ENCODE measurements at regions of chr5 and their contacts with region 1.

Region 1: DNA sequence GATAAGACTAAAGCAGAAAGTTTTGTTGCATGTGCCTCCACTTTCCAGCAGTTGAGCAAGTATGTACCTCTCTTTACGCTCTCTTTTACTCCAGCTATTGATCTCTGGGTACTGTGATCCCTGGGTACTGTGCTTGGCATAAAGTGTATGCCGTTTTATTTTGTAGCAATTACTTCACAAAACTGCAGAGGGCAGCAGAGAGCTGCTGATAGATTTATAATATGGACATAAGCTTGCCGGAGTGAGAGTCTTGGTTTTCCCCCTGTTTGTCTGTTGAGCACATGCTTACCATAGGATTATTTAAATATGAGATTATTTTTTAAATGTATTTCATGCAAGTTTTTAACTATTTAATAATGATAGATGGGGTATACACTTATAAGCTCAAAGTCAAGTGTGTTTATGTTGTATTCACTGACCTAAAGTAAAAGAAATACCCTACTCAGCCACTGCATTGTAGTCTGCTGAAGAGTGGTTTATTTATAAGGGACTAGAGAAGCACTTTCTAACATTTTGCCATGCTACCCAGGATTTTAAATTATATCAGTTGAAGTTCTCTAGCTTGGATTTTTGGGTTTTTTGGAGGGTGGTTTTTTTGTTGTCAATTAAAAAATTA is 13.0 kb downstream of the TTC1 start:
- DNase-seq: no peak
- ATAC-seq: peak; percentile 86 to 95 (median 91)
- H3K4me3 ChIP-seq: no peak overlapping the region
- H3K27ac ChIP-seq: no peak overlapping the region
- H3K4me1 ChIP-seq: no peaks in the 10 kb centered on the region
- H3K27me3 ChIP-seq: no peaks in the 10 kb centered on the region
- CTCF ChIP-seq: peak; percentile 83

Region 2: DNA sequence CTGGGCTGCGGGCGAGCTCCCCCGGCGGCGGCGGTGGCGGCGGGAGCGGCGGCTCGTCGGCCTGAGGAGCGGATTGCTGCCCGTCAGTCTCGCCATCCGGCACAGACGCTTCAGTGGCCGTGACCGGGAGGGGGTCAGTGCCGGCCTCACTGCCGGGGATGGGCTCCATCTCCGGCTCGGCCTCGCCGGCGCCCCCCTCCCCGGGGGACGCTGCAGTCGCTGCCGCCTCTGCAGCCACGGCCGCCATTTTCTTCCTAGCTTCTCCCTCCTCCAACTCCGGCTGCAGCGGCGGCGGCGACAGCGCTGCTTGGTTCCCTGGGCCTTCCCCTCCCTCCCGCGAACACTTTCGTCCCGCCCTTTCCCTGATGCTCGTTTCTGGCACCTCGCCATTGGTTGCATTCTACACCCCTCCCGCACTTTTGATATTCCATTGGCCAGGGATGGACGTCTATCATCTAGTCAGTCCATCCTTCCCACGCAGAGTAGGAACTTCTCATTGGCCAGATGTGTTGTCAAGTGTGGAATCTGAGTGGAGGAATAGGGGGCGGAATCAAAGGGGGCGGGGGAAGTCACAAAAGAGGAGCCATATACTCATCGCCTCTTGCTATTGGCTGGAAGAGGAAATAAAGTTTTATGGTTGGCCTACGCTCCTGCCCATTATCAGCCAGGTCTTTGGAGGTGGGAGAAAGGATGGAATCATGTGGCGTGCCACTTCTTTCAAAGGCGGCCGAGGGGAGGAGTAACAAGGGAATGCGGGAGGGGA is 97.4 kb after region 1 on chr5 and contains the start of gene PWWP2A:
- intact Hi-C with region 1: loop called in 1 of 2 experiments (anchors 10 kb)
- DNase-seq: peak; percentile 98 to 99
- ATAC-seq: peak; percentile 92 to 97 (median 96)
- H3K4me3 ChIP-seq: peak within 1 kb of the TSS; percentile 82
- H3K27ac ChIP-seq: peak within 1 kb of the TSS; percentile 91
- H3K4me1 ChIP-seq: peaks cover 11% of the 10 kb centered on the region
- H3K27me3 ChIP-seq: no peaks in the 10 kb centered on the region
- CTCF ChIP-seq: peak; percentile 11
- total RNA-seq, gene PWWP2A: 7.3 to 13.4 (median 8.9) TPM

Region 3: DNA sequence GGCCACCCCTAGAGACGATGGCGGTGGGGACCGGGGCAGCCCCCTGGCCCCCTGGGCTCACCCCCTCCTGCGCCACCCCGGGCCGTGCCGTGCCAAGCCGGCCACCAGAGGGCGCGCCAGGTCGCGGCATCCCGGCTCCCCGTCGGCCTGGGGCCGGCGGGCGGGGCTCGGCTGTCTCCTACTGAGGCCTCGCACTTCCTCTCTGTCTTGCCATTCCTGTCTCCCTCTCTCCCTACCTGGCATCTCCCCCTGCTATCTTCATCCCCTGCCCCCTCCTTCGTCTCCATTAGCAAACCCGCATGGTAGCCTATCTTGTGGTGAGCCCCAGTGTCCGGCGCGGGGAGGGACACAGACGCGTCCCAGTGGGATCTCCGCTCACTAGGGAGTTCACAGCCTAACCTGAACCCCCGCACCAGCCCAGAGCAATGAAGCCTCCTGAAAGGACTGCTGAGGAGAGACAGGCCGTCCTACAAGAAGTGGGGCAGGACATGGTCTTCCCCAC is 177.5 kb after region 1 on chr5:
- intact Hi-C with region 1: loop called in 1 of 2 experiments (anchors 5 kb)
- DNase-seq: peak; percentile 74 to 83
- ATAC-seq: peak; percentile 94 to 100 (median 96)
- H3K4me3 ChIP-seq: peak overlapping the region; percentile 62
- H3K27ac ChIP-seq: no peak overlapping the region
- H3K4me1 ChIP-seq: peaks cover 4% of the 10 kb centered on the region
- H3K27me3 ChIP-seq: no peaks in the 10 kb centered on the region
- CTCF ChIP-seq: peak; percentile 97

Region 4: DNA sequence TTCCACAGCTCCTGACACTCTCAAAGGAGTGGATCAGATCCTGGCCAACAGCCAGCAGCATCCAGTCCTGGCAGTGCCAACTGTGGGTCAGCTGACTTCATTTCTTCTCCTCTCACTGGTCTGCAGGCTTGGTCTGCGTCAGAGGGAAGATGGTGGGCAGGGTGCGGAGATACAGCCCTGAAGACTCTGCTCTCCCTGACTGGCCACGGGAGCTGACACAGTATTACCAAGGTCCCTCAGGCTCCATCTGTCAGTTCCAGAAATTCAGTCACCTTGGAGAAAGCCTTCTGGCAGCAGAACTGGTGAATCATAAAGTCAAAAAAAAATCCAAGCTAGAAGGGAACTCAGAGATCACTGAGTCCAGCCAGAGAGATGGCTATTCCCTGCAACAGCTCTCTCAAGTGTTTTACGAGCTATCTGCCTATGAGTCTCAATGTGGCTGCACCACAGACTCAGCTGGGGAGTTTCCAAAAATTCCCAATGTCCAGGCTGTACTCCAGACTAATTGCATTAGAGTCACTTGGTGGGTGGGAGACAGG is 320.5 kb after region 1 on chr5:
- intact Hi-C with region 1: loop called (anchors 1 to 5 kb)
- DNase-seq: peak in 1 of 2 donors; percentile 21
- ATAC-seq: peak in 3 of 4 donors; percentile 33 to 43 (median 35)
- H3K4me3 ChIP-seq: no peak overlapping the region
- H3K27ac ChIP-seq: no peak overlapping the region
- H3K4me1 ChIP-seq: no peaks in the 10 kb centered on the region
- H3K27me3 ChIP-seq: no peaks in the 10 kb centered on the region
- CTCF ChIP-seq: no peak

Region 5: GRCh38 chr5:160399402-160400353 is 377.7 kb after region 1 on chr5 and contains the start of gene FAM200C:
- intact Hi-C with region 1: loop called in 1 of 2 experiments (anchors 10 kb)
- DNase-seq: peak; percentile 93 to 96
- ATAC-seq: peak; percentile 96 to 99 (median 98)
- H3K4me3 ChIP-seq: peak within 1 kb of the TSS; percentile 86
- H3K27ac ChIP-seq: peak within 1 kb of the TSS; percentile 84
- H3K4me1 ChIP-seq: peaks cover 24% of the 10 kb centered on the region
- H3K27me3 ChIP-seq: no peaks in the 10 kb centered on the region
- CTCF ChIP-seq: no peak
- total RNA-seq, gene FAM200C: 0.54 to 3.3 (median 1.2) TPM

Measured in psoas muscle (tissue), 8 donors.